GM12878 (cell line): ENCODE measurements at regions of chr10 and their contacts with region 1.

Region 1: GRCh38 chr10:98404571-98405359 is 10.2 kb downstream of the PYROXD2 start:
- DNase-seq: no peak
- ATAC-seq: peak; percentile 76
- H3K4me3 ChIP-seq: peak overlapping the region; percentile 37; the same call in 1 of the 2 replicates
- H3K27ac ChIP-seq: peak overlapping the region; percentile 72
- H3K4me1 ChIP-seq: peaks cover 29% of the 10 kb centered on the region
- H3K27me3 ChIP-seq: no peaks in the 10 kb centered on the region
- CTCF ChIP-seq: no peak
- EP300 ChIP-seq: no peak
- POLR2A ChIP-seq: no peak
- RAD21 ChIP-seq: no peak; the same call in 1 of the 2 replicates

Region 2: GRCh38 chr10:98391578-98391991 is 13.2 kb before region 1 on chr10:
- CTCF ChIA-PET with region 1: interaction called, 3 read pairs
- POLR2A ChIA-PET with region 1: interaction called, 3 read pairs
- RAD21 ChIA-PET with region 1: interaction called, 4 read pairs
- SMC1A ChIA-PET with region 1: interaction called, 11 read pairs
- in situ Hi-C with region 1: no loop called
- intact Hi-C with region 1: no loop called
- DNase-seq: no peak
- ATAC-seq: peak; percentile 67
- H3K4me3 ChIP-seq: no peak overlapping the region
- H3K27ac ChIP-seq: no peak overlapping the region
- H3K4me1 ChIP-seq: peaks cover 16% of the 10 kb centered on the region
- H3K27me3 ChIP-seq: no peaks in the 10 kb centered on the region
- CTCF ChIP-seq: no peak
- EP300 ChIP-seq: no peak
- POLR2A ChIP-seq: no peak
- RAD21 ChIP-seq: no peak

Region 3: DNA sequence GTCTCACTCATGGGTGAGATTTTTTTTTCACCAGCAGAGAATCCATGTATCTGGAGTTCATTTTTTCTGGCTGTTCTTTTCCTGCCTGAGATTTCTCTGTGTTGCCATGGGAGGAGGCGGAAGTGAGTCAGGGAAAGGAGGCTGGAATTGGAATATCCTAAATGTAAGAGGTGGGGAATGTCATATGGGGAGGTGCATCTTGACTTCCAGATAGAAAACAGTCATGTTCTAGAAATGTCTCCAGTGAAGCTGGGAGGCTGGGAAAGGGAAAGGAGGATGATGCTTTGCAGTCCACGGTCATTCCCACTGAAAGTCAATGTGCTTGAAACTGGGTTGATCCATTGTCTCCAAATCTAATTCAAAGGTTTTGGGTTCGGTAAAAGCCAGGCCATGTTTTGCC is 81.7 kb after region 1 on chr10:
- CTCF ChIA-PET with region 1: no interaction called
- POLR2A ChIA-PET with region 1: no interaction called
- RAD21 ChIA-PET with region 1: no interaction called
- SMC1A ChIA-PET with region 1: no interaction called
- in situ Hi-C with region 1: no loop called
- intact Hi-C with region 1: no loop called
- DNase-seq: no peak
- ATAC-seq: no peak
- H3K4me3 ChIP-seq: no peak overlapping the region
- H3K27ac ChIP-seq: no peak overlapping the region
- H3K4me1 ChIP-seq: no peaks in the 10 kb centered on the region
- H3K27me3 ChIP-seq: no peaks in the 10 kb centered on the region
- CTCF ChIP-seq: no peak
- EP300 ChIP-seq: no peak
- POLR2A ChIP-seq: no peak
- RAD21 ChIP-seq: no peak